Natural killer cell (primary cell): ENCODE measurements at regions of chr1 and their contacts with region 1.

Region 1: DNA sequence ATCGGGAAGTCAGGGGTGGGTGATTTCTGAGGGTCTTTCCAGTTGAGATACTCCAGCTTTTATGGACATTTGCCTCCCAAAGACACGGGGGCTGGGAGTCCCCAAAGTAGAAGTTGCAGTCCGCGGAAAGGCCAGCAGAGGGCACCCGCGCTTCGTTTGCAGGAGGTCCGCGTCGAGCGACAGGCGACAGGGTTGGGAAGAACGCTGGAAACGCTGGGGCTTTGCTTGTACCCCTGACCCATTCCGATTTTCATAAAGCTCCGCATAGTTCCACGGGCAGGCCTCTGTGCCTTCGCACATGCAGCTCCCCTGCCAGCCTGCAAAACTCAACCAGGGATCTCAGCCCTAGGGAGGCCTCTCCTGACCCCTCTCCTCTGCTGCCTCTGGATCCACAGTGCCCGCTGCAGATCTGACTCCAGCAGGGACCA is 44.2 kb upstream of the LAPTM5 start:
- DNase-seq: peak; percentile 82 to 84
- ATAC-seq: peak; percentile 67 to 91 (median 83)
- H3K4me3 ChIP-seq: no peak overlapping the region
- H3K4me3 Mint-ChIP-seq: no peak overlapping the region
- H3K27ac ChIP-seq: no peak overlapping the region
- H3K27ac Mint-ChIP-seq: no peak overlapping the region
- H3K4me1 ChIP-seq: peaks cover 18% of the 10 kb centered on the region
- H3K4me1 Mint-ChIP-seq: peaks cover 12 to 15% of the 10 kb centered on the region in 2 donors
- H3K27me3 ChIP-seq: peaks cover 9% of the 10 kb centered on the region
- H3K27me3 Mint-ChIP-seq: peaks cover 22 to 35% of the 10 kb centered on the region in 2 donors
- CTCF ChIP-seq: peak; percentile 94

Region 2: GRCh38 chr1:30763651-30764248 is 38.0 kb before region 1 on chr1:
- intact Hi-C with region 1: no loop called
- DNase-seq: no peak
- ATAC-seq: no peak
- H3K4me3 ChIP-seq: no peak overlapping the region
- H3K4me3 Mint-ChIP-seq: no peak overlapping the region
- H3K27ac ChIP-seq: no peak overlapping the region
- H3K27ac Mint-ChIP-seq: no peak overlapping the region
- H3K4me1 ChIP-seq: peaks cover 44% of the 10 kb centered on the region
- H3K4me1 Mint-ChIP-seq: peaks cover 16 to 30% of the 10 kb centered on the region in 2 donors
- H3K27me3 ChIP-seq: no peaks in the 10 kb centered on the region
- H3K27me3 Mint-ChIP-seq: no peaks in the 10 kb centered on the region
- CTCF ChIP-seq: no peak

Region 3: DNA sequence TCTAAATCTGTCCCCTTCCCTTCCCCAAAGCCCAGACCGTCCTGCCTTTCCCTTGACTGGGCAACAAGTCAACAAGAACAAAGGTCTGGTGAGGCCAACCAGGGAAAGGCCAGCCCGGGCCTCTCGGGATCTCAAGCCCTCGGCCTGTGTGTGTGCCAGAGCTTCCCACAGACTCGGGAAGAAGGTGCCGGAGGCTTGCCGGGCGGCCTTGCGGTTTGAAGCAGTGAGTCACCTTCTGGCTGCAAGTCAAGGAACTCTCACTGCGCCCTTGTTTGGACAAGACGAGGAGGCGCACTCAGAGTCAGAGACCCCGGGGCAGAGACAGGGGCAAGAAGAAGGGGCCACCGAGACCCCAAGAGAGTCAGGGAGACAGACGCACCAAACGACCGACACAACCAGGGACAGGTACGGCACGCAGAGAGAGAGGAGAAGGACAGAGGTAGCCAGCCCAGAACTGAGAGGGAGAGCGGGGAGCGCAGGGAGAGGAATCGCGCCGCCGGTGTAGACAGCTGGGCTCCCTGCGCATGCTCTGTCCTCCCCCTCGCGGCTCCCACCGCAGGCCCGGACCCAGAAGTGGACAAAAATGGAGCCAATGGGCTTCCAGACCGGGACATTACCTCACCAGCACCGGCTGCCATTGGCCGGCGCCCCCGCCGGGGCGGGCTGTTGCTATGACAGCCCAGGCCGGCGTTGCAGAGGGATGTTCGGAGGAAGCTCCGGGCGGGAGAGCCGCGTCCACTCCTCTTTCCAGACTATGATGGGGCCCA is 22.4 kb after region 1 on chr1:
- intact Hi-C with region 1: no loop called
- DNase-seq: peak; percentile 48 to 72
- ATAC-seq: peak; percentile 82 to 92 (median 87)
- H3K4me3 ChIP-seq: peak overlapping the region; percentile 1
- H3K4me3 Mint-ChIP-seq: peak overlapping the region; percentile 78
- H3K27ac ChIP-seq: no peak overlapping the region
- H3K27ac Mint-ChIP-seq: peak overlapping the region in 1 of 2 donors; percentile 75
- H3K4me1 ChIP-seq: peaks cover 23% of the 10 kb centered on the region
- H3K4me1 Mint-ChIP-seq: peaks cover 15 to 26% of the 10 kb centered on the region in 2 donors
- H3K27me3 ChIP-seq: peaks cover 18% of the 10 kb centered on the region
- H3K27me3 Mint-ChIP-seq: peaks cover 43 to 49% of the 10 kb centered on the region in 2 donors
- CTCF ChIP-seq: no peak

Region 4: GRCh38 chr1:30911046-30911954 is 109.5 kb after region 1 on chr1:
- intact Hi-C with region 1: loop called (anchors 1 kb)
- DNase-seq: peak in 1 of 2 donors; percentile 69
- ATAC-seq: peak in 1 of 3 donors; percentile 55
- H3K4me3 ChIP-seq: no peak overlapping the region
- H3K4me3 Mint-ChIP-seq: no peak overlapping the region
- H3K27ac ChIP-seq: no peak overlapping the region
- H3K27ac Mint-ChIP-seq: no peak overlapping the region
- H3K4me1 ChIP-seq: peaks cover 37% of the 10 kb centered on the region
- H3K4me1 Mint-ChIP-seq: peaks cover 11 to 17% of the 10 kb centered on the region in 2 donors
- H3K27me3 ChIP-seq: peaks cover 17% of the 10 kb centered on the region
- H3K27me3 Mint-ChIP-seq: peaks cover 29 to 34% of the 10 kb centered on the region in 2 donors
- CTCF ChIP-seq: peak; percentile 27

Region 5: GRCh38 chr1:30929135-30929889 is 127.5 kb after region 1 on chr1:
- intact Hi-C with region 1: loop called (anchors 1 kb)
- DNase-seq: peak; percentile 54 to 69
- ATAC-seq: peak; percentile 93 to 94 (median 94)
- H3K4me3 ChIP-seq: no peak overlapping the region
- H3K4me3 Mint-ChIP-seq: no peak overlapping the region
- H3K27ac ChIP-seq: peak overlapping the region; percentile 50
- H3K27ac Mint-ChIP-seq: peak overlapping the region; percentile 75 to 87
- H3K4me1 ChIP-seq: peaks cover 13% of the 10 kb centered on the region
- H3K4me1 Mint-ChIP-seq: peaks cover 17 to 20% of the 10 kb centered on the region in 2 donors
- H3K27me3 ChIP-seq: no peaks in the 10 kb centered on the region
- H3K27me3 Mint-ChIP-seq: no peaks in the 10 kb centered on the region
- CTCF ChIP-seq: peak; percentile 84